ENCODE measurements at regions of chr16 and their contacts with region 1.

Region 1: DNA sequence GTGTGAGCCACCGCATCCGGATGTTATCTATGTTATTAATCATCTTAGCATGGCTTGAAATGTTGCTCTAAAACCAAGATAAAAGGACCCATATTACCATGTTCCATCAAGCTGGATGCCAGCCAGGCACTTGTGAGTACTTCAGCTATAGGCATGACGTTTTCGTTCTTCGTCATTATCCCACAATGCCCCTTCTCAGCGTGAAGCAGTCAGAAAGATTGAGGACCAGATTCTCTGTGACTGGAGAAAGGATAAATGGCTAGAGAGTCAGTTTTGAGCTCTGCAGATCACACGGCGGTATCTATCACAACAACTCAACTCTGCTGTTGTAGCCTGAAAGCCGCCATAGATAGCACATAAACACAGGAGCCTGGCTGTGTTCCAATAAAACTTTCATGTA is 29.8 kb upstream of the LCMT1 start:
- DNase-seq: no peak
- H3K4me3 ChIP-seq: no peak overlapping the region
- H3K27ac ChIP-seq: no peak overlapping the region
- H3K4me1 ChIP-seq: no peaks in the 10 kb centered on the region
- H3K27me3 ChIP-seq: no peaks in the 10 kb centered on the region
- CTCF ChIP-seq: no peak

Region 2: GRCh38 chr16:25045696-25046381 is 35.9 kb before region 1 on chr16:
- CTCF ChIA-PET with region 1: no interaction called
- dilution Hi-C with region 1: no loop called
- in situ Hi-C with region 1: no loop called
- intact Hi-C with region 1: loop called (anchors 1 kb)
- DNase-seq: peak; percentile 53
- H3K4me3 ChIP-seq: no peak overlapping the region
- H3K27ac ChIP-seq: no peak overlapping the region
- H3K4me1 ChIP-seq: peaks cover 16% of the 10 kb centered on the region
- H3K27me3 ChIP-seq: no peaks in the 10 kb centered on the region
- CTCF ChIP-seq: no peak